HepG2 (cell line): ENCODE measurements at regions of chr19 and their contacts with region 1.

Region 1: DNA sequence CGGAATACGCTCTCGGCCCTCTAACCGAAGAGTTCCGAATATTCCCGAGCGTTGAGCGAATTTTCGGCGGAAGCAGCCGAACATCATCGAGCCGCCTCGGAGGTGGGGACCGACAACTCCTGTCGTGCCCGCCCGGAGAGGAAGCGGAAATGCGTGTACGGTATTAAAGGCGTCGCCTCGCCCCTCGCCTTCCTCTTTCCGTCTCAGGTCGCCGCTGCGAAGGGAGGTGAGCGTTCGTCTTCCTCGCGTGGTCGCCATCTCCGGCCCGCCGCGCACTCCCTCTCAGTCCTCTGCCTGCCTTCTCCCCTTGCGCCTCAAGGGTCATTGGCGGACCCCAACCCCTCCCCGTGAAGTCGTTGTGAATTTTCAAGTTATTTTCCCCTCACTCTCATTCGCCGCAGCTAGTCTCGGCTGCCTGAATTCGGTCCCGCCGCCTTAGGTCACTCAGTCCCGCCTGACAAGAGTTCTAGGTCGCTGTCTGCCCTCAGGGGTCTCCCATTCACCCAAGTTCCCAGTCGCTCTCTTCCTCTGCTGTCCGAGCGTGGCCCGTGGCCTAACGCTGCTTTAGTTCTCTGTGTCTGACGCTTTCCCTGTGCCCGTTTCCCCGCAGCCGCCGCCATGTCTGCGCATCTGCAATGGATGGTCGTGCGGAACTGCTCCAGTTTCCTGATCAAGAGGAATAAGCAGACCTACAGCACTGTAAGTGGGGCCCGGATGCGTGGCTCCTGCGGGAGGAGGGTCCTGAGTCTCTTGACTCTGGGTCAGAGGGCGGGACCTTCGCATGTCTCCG is at the start of gene RPL28:
- DNase-seq: peak; percentile 96
- ATAC-seq: peak; percentile 77
- H3K4me3 ChIP-seq: peak within 1 kb of the TSS; percentile 86 to 100 (median 89)
- H3K27ac ChIP-seq: peak within 1 kb of the TSS; percentile 92
- H3K4me1 ChIP-seq: peaks cover 42% of the 10 kb centered on the region
- H3K27me3 ChIP-seq: no peaks in the 10 kb centered on the region; a peak in 1 of 5 replicates
- CTCF ChIP-seq: no peak; the same call in 1 of the 2 replicates
- EP300 ChIP-seq: no peak
- POLR2A ChIP-seq: peak; percentile 99 to 100
- RAD21 ChIP-seq: no peak
- total RNA-seq, gene RPL28: 105 and 149 TPM in 2 replicates

Region 2: GRCh38 chr19:55333870-55334269 is 52.1 kb before region 1 on chr19:
- CTCF ChIA-PET with region 1: no interaction called
- POLR2A ChIA-PET with region 1: interaction called, 8 read pairs
- in situ Hi-C with region 1: no loop called
- intact Hi-C with region 1: loop called (anchors 5 kb)
- DNase-seq: peak; percentile 91
- ATAC-seq: peak; percentile 73
- H3K4me3 ChIP-seq: peak overlapping the region; percentile 64 to 70 (median 66)
- H3K27ac ChIP-seq: peak overlapping the region; percentile 87
- H3K4me1 ChIP-seq: peaks cover 41% of the 10 kb centered on the region
- H3K27me3 ChIP-seq: no peaks in the 10 kb centered on the region
- CTCF ChIP-seq: no peak
- EP300 ChIP-seq: peak in 1 of 2 experiments; percentile 70; a peak in 2 of 4 replicates
- POLR2A ChIP-seq: peak; percentile 48 to 81; a peak in 3 of 4 replicates
- RAD21 ChIP-seq: no peak

Region 3: GRCh38 chr19:55426042-55426441 is 40.1 kb after region 1 on chr19:
- CTCF ChIA-PET with region 1: no interaction called
- POLR2A ChIA-PET with region 1: no interaction called
- in situ Hi-C with region 1: no loop called
- intact Hi-C with region 1: no loop called
- DNase-seq: no peak
- ATAC-seq: no peak
- H3K4me3 ChIP-seq: no peak overlapping the region
- H3K27ac ChIP-seq: no peak overlapping the region
- H3K4me1 ChIP-seq: no peaks in the 10 kb centered on the region
- H3K27me3 ChIP-seq: peaks cover 0 to 15% of the 10 kb centered on the region in 2 experiments; a peak in 1 of 5 replicates
- CTCF ChIP-seq: no peak
- EP300 ChIP-seq: no peak
- POLR2A ChIP-seq: no peak
- RAD21 ChIP-seq: no peak

Region 4: DNA sequence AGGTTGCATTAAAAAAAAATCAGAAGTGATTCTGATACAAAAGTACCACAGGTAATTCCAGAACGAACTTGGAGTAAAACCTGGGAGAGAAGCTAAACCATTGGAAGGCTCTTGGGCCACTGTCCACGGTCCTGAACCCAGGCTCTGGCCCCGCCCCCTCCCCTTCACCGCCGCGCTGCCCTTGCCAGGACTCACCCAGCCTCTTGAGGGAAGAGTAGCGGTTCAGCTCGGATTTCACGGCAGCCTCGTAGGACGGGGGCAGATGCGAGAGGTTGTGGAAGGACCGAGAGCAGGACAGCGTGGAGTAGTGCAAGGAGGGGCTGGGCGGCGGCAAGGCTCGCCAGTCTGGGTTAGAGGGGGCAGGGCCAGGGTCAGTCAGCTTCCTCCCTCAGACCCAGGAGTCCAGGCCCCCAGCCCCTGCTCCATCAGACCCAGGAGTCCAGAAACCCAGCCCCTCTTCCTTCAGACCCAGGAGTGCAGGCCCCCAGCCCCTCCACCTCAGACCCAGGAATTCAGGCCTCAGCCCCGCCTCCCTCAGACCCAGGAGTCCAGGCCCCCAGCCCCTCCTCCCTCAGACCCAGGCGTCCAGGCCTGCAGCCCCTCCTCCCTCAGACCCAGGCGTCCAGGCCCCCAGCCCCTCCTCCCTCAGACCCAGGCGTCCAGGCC is 51.6 kb after region 1 on chr19:
- CTCF ChIA-PET with region 1: no interaction called
- POLR2A ChIA-PET with region 1: no interaction called
- in situ Hi-C with region 1: no loop called
- intact Hi-C with region 1: no loop called
- DNase-seq: peak; percentile 46
- ATAC-seq: peak; percentile 79
- H3K4me3 ChIP-seq: no peak overlapping the region
- H3K27ac ChIP-seq: no peak overlapping the region
- H3K4me1 ChIP-seq: no peaks in the 10 kb centered on the region
- H3K27me3 ChIP-seq: peaks cover 5 to 21% of the 10 kb centered on the region in 2 experiments; a peak in 4 of 5 replicates
- CTCF ChIP-seq: no peak
- EP300 ChIP-seq: no peak
- POLR2A ChIP-seq: no peak
- RAD21 ChIP-seq: no peak

Region 5: GRCh38 chr19:55484593-55485438 is 98.9 kb after region 1 on chr19 and contains the start of gene NAT14:
- CTCF ChIA-PET with region 1: no interaction called
- POLR2A ChIA-PET with region 1: no interaction called
- in situ Hi-C with region 1: no loop called
- intact Hi-C with region 1: no loop called
- DNase-seq: peak; percentile 39
- ATAC-seq: peak; percentile 33
- H3K4me3 ChIP-seq: peak within 1 kb of the TSS; percentile 62 to 79 (median 69)
- H3K27ac ChIP-seq: peak within 1 kb of the TSS; percentile 33
- H3K4me1 ChIP-seq: peaks cover 33% of the 10 kb centered on the region
- H3K27me3 ChIP-seq: peaks cover 3 to 5% of the 10 kb centered on the region in 2 experiments; a peak in 3 of 5 replicates
- CTCF ChIP-seq: no peak; the same call in 1 of the 2 replicates
- EP300 ChIP-seq: no peak
- POLR2A ChIP-seq: peak in 1 of 2 experiments; percentile 57; a peak in 2 of 4 replicates
- RAD21 ChIP-seq: 0 out of 2 replicates have a peak, but pooled peaks have one; percentile 8
- total RNA-seq, gene NAT14: 14.7 and 22.3 TPM in 2 replicates